ENCODE measurements at regions of chr19 and their contacts with region 1.

Region 1: GRCh38 chr19:19515764-19516519 is at the start of gene NDUFA13:
- DNase-seq: peak; percentile 95
- ATAC-seq: peak; percentile 91
- total RNA-seq, gene NDUFA13: 1,344 TPM

Region 2: GRCh38 chr19:19203012-19203856 is 312.7 kb before region 1 on chr19 and contains the start of gene NR2C2AP:
- intact Hi-C with region 1: loop called (anchors 10 kb)
- DNase-seq: peak; percentile 94
- ATAC-seq: peak; percentile 93
- total RNA-seq, gene NR2C2AP: 7.8 TPM

Region 3: GRCh38 chr19:19475849-19476828 is 39.8 kb before region 1 on chr19:
- intact Hi-C with region 1: no loop called
- DNase-seq: no peak
- ATAC-seq: peak; percentile 41

Measured in Right ventricle myocardium inferior (tissue), 1 donor.